ENCODE measurements at regions of chr10 and their contacts with region 1.

Region 1: GRCh38 chr10:35635576-35635975 is 6.5 kb downstream of the FZD8 start:
- DNase-seq: peak; percentile 20
- ATAC-seq: no peak
- H3K4me3 Mint-ChIP-seq: no peak overlapping the region
- H3K27ac Mint-ChIP-seq: no peak overlapping the region
- H3K4me1 Mint-ChIP-seq: peaks cover 45% of the 10 kb centered on the region
- H3K27me3 Mint-ChIP-seq: peaks cover 19% of the 10 kb centered on the region
- CTCF ChIP-seq: peak; percentile 80

Region 2: DNA sequence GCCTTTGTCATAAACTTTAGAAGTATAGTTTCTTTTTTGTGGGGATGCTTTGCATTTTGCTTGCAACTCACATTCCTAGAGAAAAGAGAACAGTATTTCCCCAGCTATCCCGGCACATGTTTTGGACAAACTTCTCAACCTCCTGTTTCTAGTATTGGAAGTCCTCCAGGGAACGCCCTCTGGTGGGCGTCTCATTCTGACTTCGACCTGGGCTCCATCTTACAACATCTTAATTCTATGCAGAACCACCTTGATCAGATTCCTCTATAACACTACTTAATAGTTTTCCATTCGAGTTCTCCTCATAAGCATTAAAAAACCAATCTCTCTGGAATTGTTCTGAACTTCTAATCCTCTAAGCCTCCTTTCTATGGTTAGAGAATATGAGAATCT is 146.1 kb after region 1 on chr10:
- CTCF ChIA-PET with region 1: interaction called, 11 read pairs
- POLR2A ChIA-PET with region 1: no interaction called
- DNase-seq: peak; percentile 60
- ATAC-seq: peak; percentile 53
- H3K4me3 Mint-ChIP-seq: no peak overlapping the region
- H3K27ac Mint-ChIP-seq: no peak overlapping the region
- H3K4me1 Mint-ChIP-seq: peaks cover 12% of the 10 kb centered on the region
- H3K27me3 Mint-ChIP-seq: peaks cover 6% of the 10 kb centered on the region
- CTCF ChIP-seq: no peak

Region 3: GRCh38 chr10:35822316-35822715 is 186.7 kb after region 1 on chr10:
- CTCF ChIA-PET with region 1: interaction called, 12 read pairs
- POLR2A ChIA-PET with region 1: no interaction called
- DNase-seq: peak; percentile 73
- ATAC-seq: peak; percentile 99
- H3K4me3 Mint-ChIP-seq: no peak overlapping the region
- H3K27ac Mint-ChIP-seq: no peak overlapping the region
- H3K4me1 Mint-ChIP-seq: peaks cover 16% of the 10 kb centered on the region
- H3K27me3 Mint-ChIP-seq: peaks cover 4% of the 10 kb centered on the region
- CTCF ChIP-seq: no peak

Region 4: DNA sequence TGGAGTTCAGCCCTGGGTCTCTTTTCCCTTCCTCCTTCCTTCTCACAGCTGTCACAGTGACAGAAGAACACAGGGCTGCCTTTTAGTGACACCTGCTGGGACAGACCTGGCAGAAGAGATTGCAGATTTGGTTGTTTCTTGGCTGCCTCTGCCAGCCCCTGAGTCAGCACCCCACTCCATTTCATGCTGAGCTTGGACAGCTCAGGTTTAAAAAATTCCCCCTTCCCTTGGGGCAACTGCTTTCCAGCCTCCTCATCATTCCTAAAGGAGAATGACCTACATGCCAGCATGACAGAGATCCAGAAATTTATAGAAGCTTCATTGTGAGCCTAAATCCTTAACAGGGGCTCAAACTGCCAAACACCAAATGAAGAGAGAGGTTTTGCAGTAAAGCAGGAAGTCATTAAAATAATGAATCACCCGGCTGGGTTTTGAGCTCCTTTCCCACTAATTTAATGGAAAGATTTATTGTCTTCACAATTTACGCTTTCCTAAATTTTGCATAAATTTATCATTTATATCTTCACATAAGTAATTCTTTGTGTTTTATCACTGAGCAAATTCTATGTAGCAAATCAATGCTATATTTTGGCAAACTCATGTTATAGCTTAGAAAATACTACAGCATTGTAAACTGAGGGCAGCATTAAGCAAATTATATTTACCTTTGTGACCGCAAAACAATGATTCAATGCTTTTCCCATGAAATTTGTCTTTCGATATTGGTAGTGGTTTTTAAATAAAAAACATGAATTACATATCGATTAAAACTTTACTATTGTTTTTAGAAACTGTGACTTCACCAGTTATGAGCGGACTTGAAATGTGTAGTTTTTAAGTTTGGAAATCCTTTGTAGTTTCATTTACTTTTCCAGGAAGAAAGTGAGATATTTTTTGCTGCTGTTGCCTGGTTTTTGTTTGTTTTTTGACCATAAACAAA is 1090.3 kb after region 1 on chr10:
- CTCF ChIA-PET with region 1: interaction called, 11 read pairs
- POLR2A ChIA-PET with region 1: no interaction called
- DNase-seq: peak; percentile 64
- ATAC-seq: peak; percentile 99
- H3K4me3 Mint-ChIP-seq: no peak overlapping the region
- H3K27ac Mint-ChIP-seq: peak overlapping the region; percentile 90; the same call in 1 of the 2 replicates
- H3K4me1 Mint-ChIP-seq: peaks cover 18% of the 10 kb centered on the region
- H3K27me3 Mint-ChIP-seq: no peaks in the 10 kb centered on the region
- CTCF ChIP-seq: no peak

Region 5: GRCh38 chr10:36779234-36779846 is 1143.8 kb after region 1 on chr10:
- CTCF ChIA-PET with region 1: interaction called, 50 read pairs
- POLR2A ChIA-PET with region 1: no interaction called
- DNase-seq: peak; percentile 24
- ATAC-seq: peak; percentile 87
- H3K4me3 Mint-ChIP-seq: no peak overlapping the region
- H3K27ac Mint-ChIP-seq: no peak overlapping the region
- H3K4me1 Mint-ChIP-seq: peaks cover 6% of the 10 kb centered on the region
- H3K27me3 Mint-ChIP-seq: no peaks in the 10 kb centered on the region
- CTCF ChIP-seq: no peak

Region 6: DNA sequence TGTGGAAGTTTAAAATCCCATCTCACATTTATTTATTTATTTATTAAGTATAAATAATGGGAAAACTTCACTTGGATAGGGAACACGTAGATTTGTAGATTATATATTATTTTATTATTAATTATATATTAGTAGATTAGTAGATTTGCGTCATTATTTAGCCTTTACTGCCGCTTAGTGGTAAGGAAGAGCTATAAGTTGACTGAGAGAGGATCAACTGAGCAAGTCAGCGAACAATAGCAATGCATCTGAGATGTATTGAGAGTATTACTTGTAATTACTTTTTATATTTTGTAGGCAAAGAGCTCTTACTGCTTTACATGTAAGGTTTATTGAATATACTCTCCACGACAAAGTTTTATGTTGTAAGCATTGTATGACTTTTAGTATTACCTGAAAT is 1245.3 kb after region 1 on chr10:
- CTCF ChIA-PET with region 1: interaction called, 12 read pairs
- POLR2A ChIA-PET with region 1: no interaction called
- DNase-seq: no peak
- ATAC-seq: no peak
- H3K4me3 Mint-ChIP-seq: no peak overlapping the region
- H3K27ac Mint-ChIP-seq: no peak overlapping the region
- H3K4me1 Mint-ChIP-seq: no peaks in the 10 kb centered on the region
- H3K27me3 Mint-ChIP-seq: peaks cover 5% of the 10 kb centered on the region; the same call in 1 of the 2 replicates
- CTCF ChIP-seq: no peak